Activated CD4-positive, alpha-beta T cell treated with anti-CD3 and anti-CD28 coated beads for 36 hours (primary cell): ENCODE measurements at regions of chr12 and their contacts with region 1.

Region 1: GRCh38 chr12:41585784-41586183 is 397.7 kb downstream of the PDZRN4 start:
- DNase-seq: no peak
- ATAC-seq: peak; percentile 65
- H3K4me3 Mint-ChIP-seq: no peak overlapping the region
- H3K27ac Mint-ChIP-seq: no peak overlapping the region
- H3K4me1 Mint-ChIP-seq: no peaks in the 10 kb centered on the region
- H3K27me3 Mint-ChIP-seq: peaks cover 5% of the 10 kb centered on the region

Region 2: DNA sequence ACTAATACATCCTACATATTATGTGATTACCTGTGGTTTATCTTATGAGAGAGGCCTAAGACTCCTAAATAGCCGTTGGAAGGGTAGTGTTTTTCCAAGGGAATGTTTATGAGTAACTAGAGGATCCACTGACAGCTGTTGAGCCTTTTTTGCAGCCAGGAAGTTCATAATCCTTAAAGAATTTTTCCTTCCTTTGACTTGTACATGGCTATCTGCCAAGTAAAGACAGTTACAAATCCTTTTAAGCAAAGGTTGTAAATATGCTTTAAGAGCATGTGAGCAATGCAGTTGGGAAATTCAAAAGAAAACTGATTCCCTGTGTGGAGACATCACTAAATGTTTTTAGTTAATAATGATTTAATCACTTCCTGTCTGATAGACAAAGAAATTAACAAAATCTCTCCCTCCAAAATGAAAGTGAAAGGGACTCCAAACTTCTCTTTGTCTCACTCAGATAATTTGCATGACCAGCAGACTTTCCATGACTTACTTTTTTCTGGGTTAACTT is 63.9 kb before region 1 on chr12:
- CTCF ChIA-PET with region 1: no interaction called
- POLR2A ChIA-PET with region 1: no interaction called
- intact Hi-C with region 1: loop called in 1 of 2 experiments (anchors 10 kb)
- DNase-seq: no peak
- ATAC-seq: no peak
- H3K4me3 Mint-ChIP-seq: no peak overlapping the region
- H3K27ac Mint-ChIP-seq: no peak overlapping the region
- H3K4me1 Mint-ChIP-seq: peaks cover 16% of the 10 kb centered on the region
- H3K27me3 Mint-ChIP-seq: no peaks in the 10 kb centered on the region